Activated B cell treated with CpG ODN at 0.5 μM for 24 hours (primary cell): ENCODE measurements at regions of chr5 and their contacts with region 1.

Region 1: DNA sequence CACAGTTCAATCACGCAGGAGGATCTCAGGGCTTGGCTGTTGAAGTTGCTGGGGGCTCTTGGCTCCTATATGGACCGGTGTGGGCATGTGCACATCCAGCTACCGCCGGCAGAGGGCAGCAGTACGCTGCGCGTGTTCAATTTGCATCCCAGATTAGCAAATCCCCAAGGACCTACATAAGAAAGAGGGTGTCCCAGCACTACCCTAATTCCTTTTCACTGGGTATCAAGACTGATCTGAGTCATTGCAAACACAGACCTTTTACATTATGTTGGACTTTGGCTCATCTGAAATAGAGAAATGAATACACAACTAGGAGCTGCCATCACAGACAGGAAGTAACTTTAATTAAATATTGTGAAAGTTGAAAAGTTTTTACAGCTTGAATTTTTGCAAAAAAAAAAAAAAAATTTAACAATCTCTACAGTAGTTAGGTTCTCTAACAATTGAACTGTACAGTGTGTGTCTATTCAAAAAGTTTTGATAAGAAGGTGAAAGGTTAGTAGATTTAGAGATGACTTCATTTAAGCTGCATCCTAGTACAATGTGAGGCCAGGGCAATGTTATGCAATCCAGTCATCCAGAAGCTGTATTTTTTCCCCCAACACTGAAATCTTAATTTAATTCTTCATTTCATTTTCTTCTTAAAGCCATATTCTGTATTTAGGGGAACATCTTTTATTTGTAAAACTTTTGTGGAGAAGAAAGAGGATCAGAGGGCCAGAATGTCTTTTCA is 404.0 kb downstream of the EBF1 start:
- DNase-seq: peak; percentile 76
- ATAC-seq: peak; percentile 96
- H3K4me3 Mint-ChIP-seq: no peak overlapping the region
- H3K27ac Mint-ChIP-seq: peak overlapping the region; percentile 73
- H3K4me1 Mint-ChIP-seq: peaks cover 26% of the 10 kb centered on the region
- H3K27me3 Mint-ChIP-seq: no peaks in the 10 kb centered on the region
- CTCF ChIP-seq: peak; percentile 92

Region 2: DNA sequence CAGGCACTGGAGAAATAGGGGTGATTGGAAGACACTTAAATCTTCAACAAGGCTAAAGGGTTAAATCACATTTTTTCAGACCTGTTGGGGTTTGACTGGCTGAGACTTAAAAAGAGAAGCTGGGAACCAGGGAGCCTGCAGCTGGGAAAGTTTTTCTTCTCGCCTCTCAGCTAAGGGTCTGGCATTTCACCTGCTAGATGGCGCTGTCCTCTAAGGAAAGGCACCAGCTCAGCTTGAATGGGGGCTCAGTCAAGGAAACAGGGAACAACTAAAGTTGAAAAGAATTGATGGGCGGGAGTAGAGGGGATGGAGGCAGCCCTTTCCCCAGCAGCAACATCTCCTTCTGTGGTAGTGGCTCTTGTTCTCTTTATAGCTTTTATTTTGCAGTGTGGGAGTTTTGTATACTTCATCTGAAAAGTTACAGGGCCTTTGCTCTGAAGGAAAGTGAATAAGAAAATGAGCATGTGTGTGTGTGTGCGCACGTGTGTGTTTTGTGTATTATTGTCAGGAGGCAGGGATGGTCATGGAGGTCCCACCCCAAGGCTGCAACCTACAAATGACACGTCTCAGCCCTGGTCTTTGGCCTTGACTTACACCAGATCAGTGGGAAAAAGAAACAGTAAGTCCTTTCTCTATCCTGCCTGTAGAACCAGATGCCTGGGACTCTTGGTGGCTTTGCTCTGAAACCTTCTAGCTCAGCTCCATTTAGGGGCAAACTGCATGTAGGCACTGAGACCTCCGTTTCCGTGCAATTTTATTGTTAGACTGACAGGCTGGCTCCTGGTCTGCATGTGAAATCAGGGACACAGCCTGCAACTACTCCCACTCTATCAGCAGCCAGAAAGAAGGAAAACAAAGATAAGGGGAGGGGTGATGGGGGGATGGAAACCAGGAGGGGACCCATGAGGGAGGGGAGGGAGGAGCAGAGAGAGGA is 520.6 kb before region 1 on chr5:
- CTCF ChIA-PET with region 1: interaction called, 55 read pairs
- POLR2A ChIA-PET with region 1: interaction called, 11 read pairs
- intact Hi-C with region 1: loop called (anchors 1 kb)
- DNase-seq: peak; percentile 48
- ATAC-seq: peak; percentile 82
- H3K4me3 Mint-ChIP-seq: no peak overlapping the region
- H3K27ac Mint-ChIP-seq: no peak overlapping the region
- H3K4me1 Mint-ChIP-seq: peaks cover 33% of the 10 kb centered on the region
- H3K27me3 Mint-ChIP-seq: no peaks in the 10 kb centered on the region
- CTCF ChIP-seq: peak; percentile 76

Region 3: DNA sequence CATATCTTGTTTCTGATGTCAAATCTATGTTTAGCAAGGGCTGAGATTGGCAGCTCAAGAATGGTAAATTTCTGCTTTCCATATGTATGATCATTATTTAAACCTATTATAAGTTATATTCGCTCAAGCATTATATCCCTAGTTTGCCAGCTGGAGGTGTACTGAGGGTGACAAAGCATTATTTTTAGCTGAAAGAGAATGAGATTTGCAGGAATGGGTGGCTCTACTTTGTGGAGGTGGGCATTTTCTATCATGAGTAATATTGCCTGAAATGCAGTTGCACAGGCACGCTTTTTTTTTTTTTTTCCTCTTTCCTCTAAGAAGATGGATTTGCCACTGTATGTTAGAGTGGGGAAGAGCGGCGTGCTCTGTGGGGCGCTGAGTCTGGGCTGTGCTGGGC is 10.1 kb after region 1 on chr5:
- CTCF ChIA-PET with region 1: no interaction called
- POLR2A ChIA-PET with region 1: no interaction called
- intact Hi-C with region 1: no loop called
- DNase-seq: no peak
- ATAC-seq: no peak
- H3K4me3 Mint-ChIP-seq: no peak overlapping the region
- H3K27ac Mint-ChIP-seq: peak overlapping the region; percentile 12
- H3K4me1 Mint-ChIP-seq: peaks cover 18% of the 10 kb centered on the region
- H3K27me3 Mint-ChIP-seq: no peaks in the 10 kb centered on the region
- CTCF ChIP-seq: no peak

Region 4: GRCh38 chr5:158770506-158770905 is 74.7 kb after region 1 on chr5:
- CTCF ChIA-PET with region 1: interaction called, 4 read pairs
- POLR2A ChIA-PET with region 1: interaction called, 9 read pairs
- intact Hi-C with region 1: loop called (anchors 2 kb)
- DNase-seq: no peak
- ATAC-seq: no peak
- H3K4me3 Mint-ChIP-seq: peak overlapping the region; percentile 16
- H3K27ac Mint-ChIP-seq: peak overlapping the region; percentile 59
- H3K4me1 Mint-ChIP-seq: peaks cover 91% of the 10 kb centered on the region
- H3K27me3 Mint-ChIP-seq: no peaks in the 10 kb centered on the region
- CTCF ChIP-seq: no peak

Region 5: DNA sequence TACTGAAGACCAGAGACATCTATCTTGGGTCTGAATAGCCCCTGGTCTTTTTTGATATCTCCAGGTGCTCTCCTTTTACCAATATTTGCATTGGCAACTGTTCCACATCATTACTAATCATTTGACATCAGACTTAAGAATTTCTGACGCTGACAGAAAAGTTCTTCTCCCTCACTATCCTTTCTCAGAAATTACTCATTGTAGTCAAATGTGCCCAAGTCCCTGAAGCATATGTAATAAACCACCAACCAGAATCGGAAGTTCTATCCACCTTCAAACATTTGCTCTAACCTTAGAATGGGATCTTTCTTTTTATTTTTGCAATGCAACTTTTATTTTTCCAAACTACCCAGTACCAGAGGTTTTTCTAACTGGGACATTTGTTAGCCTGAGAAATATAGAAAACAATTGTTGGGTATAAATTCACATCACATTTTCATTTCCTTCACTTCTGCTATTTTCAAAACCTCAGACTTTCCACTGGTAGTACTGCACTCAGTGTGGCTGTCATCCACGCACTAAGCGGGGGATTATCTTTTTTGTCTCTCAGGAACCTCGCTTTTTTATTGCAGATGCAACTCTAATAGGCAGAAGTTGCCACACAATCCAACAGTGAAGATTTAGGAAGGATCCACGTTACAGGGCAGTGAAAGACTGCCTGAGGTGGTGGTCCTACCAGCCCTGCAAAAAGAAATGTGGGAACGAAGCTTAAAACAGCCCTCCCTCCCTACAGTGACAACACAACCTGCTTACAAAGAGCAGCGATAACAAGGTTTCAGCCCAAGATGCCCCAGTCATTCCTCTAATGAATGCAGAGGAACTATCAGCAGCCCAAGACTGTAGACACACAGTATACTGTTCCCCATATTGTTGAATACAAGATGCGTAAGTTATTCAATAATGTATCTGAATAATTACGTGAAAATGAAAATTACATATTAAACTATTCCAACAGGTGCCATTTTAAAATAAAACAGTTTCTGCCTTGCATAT is 202.7 kb after region 1 on chr5:
- CTCF ChIA-PET with region 1: interaction called, 5 read pairs
- POLR2A ChIA-PET with region 1: interaction called, 19 read pairs
- intact Hi-C with region 1: loop called (anchors 1 kb)
- DNase-seq: peak; percentile 33
- ATAC-seq: peak; percentile 74
- H3K4me3 Mint-ChIP-seq: peak overlapping the region; percentile 25
- H3K27ac Mint-ChIP-seq: peak overlapping the region; percentile 93
- H3K4me1 Mint-ChIP-seq: peaks cover 78% of the 10 kb centered on the region
- H3K27me3 Mint-ChIP-seq: no peaks in the 10 kb centered on the region
- CTCF ChIP-seq: no peak

Region 6: DNA sequence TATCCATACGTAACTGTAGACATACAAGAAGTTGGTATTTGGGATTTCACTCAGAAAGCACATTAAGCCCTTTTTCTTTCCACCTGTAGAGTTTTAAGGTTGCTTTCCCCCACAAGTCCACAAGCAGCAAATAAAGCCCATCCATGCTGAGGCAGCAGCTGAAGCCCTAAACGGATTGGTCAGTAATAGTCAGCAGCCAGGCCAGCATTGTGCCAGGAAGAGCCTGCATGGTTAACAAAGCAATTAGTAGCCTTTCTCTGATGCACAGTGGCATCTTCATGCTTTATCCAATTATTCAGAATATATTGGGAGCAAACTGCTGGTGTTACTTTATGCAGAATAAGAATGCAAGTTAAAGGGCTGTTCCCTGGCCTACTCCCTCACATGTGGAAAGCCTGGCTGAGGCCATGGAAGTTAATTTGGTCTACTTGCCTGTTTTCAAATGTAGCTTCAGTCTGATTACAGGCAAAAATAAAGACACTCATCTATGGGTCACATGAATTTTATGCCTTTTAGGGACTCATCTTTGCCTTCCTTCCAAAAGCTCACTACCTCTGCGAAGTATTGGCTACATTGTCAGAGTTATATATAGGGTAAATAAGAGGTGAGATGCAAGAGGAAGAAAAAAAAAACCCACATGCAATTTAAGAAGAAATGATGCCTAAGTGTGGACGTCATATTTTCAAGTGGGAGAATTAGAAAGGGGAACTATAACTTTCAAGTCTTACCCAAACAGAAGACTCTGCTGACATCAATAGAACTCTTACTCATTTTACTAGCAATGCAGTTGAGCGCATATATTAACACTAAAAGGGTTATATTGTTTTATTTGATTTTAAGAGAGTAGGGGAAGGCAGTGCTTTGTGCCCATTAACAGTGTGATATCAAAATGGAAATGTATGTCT is 388.0 kb after region 1 on chr5:
- CTCF ChIA-PET with region 1: no interaction called
- POLR2A ChIA-PET with region 1: no interaction called
- intact Hi-C with region 1: loop called (anchors 1 kb)
- DNase-seq: no peak
- ATAC-seq: peak; percentile 93
- H3K4me3 Mint-ChIP-seq: peak overlapping the region; percentile 72
- H3K27ac Mint-ChIP-seq: peak overlapping the region; percentile 93
- H3K4me1 Mint-ChIP-seq: peaks cover 70% of the 10 kb centered on the region
- H3K27me3 Mint-ChIP-seq: no peaks in the 10 kb centered on the region
- CTCF ChIP-seq: no peak